ENCODE measurements at regions of chr10 and their contacts with region 1.

Region 1: DNA sequence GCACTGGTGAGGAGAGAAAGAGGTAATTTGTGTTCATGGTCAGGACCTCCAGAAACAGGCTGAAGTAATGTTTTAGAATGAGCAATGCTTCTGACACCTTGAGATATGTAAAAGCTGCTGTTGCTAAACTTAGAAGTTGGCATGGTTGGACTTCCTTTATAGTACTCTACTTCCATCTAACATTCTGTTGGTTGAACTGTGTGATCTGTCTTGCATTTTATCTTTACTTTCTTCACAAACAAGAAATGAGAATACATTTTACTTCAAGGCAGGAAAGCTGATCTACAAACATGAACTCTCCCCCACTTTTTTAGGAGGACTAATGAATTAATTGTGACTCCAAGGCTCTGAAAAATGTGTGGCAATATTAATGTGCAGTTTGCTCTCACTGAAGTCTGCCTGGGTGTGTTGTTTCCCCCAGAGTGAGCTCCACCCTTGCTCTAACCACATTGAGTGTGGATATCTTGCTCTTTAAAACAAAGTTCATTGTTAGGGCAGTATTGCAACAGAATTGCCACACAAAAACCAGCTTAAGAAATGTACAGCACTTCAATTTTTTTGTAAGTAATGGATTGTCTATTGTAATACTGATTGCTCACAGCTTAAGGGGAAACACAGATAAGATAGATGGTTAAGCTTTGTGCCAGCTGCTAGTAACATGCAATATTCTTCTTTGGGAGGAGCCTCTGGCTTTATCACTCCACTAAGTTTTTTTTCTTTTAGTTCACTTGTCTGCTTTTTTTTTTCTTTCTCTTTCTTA is 69.0 kb downstream of the ADD3 start:
- DNase-seq: peak in 5 of 9 experiments; percentile 31 to 71 (median 50)
- ATAC-seq: peak; percentile 65
- H3K4me3 ChIP-seq: peak overlapping the region; percentile 17 to 39
- H3K4me3 Mint-ChIP-seq: peak overlapping the region; percentile 79
- H3K27ac ChIP-seq: peak overlapping the region; percentile 48 to 76
- H3K27ac Mint-ChIP-seq: peak overlapping the region; percentile 96
- H3K4me1 ChIP-seq: peaks cover 83% of the 10 kb centered on the region
- H3K4me1 Mint-ChIP-seq: peaks cover 86% of the 10 kb centered on the region
- H3K27me3 ChIP-seq: no peaks in the 10 kb centered on the region
- H3K27me3 Mint-ChIP-seq: no peaks in the 10 kb centered on the region
- CTCF ChIP-seq: no peak

Region 2: GRCh38 chr10:109173121-109173520 is 903.6 kb before region 1 on chr10:
- CTCF ChIA-PET with region 1: no interaction called
- POLR2A ChIA-PET with region 1: no interaction called
- intact Hi-C with region 1: no loop called
- DNase-seq: no peak
- ATAC-seq: no peak
- H3K4me3 ChIP-seq: no peak overlapping the region
- H3K4me3 Mint-ChIP-seq: no peak overlapping the region
- H3K27ac ChIP-seq: no peak overlapping the region
- H3K27ac Mint-ChIP-seq: no peak overlapping the region
- H3K4me1 ChIP-seq: no peaks in the 10 kb centered on the region
- H3K4me1 Mint-ChIP-seq: no peaks in the 10 kb centered on the region
- H3K27me3 ChIP-seq: no peaks in the 10 kb centered on the region
- H3K27me3 Mint-ChIP-seq: no peaks in the 10 kb centered on the region
- CTCF ChIP-seq: no peak

Region 3: GRCh38 chr10:110042181-110042580 is 34.6 kb before region 1 on chr10:
- CTCF ChIA-PET with region 1: interaction called, 3 read pairs
- POLR2A ChIA-PET with region 1: no interaction called
- intact Hi-C with region 1: loop called in 1 of 2 experiments (anchors 2 kb)
- DNase-seq: no peak
- ATAC-seq: no peak
- H3K4me3 ChIP-seq: no peak overlapping the region
- H3K4me3 Mint-ChIP-seq: no peak overlapping the region
- H3K27ac ChIP-seq: no peak overlapping the region
- H3K27ac Mint-ChIP-seq: no peak overlapping the region
- H3K4me1 ChIP-seq: peaks cover 41% of the 10 kb centered on the region
- H3K4me1 Mint-ChIP-seq: peaks cover 72% of the 10 kb centered on the region
- H3K27me3 ChIP-seq: no peaks in the 10 kb centered on the region
- H3K27me3 Mint-ChIP-seq: no peaks in the 10 kb centered on the region
- CTCF ChIP-seq: no peak

Region 4: DNA sequence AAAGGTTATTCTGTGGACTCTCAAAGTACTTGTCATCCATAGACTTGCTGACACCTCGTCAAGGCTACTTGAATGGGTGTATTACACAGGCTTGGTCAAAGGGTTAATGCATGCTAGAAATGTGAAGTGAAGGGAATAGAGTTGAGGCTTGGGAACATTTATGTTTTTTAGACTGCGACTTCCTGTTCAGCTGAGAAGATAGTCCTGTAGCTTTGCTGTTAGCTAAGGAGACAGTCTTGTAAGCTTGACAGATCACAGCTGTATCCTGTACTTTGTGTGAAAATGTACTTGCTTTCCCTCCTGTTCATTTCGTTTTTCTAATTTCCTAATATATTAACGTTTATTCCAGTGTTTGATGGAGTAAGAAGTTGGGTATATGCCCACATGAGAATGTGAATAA is 16.8 kb before region 1 on chr10:
- CTCF ChIA-PET with region 1: interaction called, 4 read pairs
- POLR2A ChIA-PET with region 1: interaction called, 3 read pairs
- intact Hi-C with region 1: loop called in 1 of 2 experiments (anchors 2 kb)
- DNase-seq: no peak
- ATAC-seq: peak; percentile 29
- H3K4me3 ChIP-seq: no peak overlapping the region
- H3K4me3 Mint-ChIP-seq: peak overlapping the region; percentile 13
- H3K27ac ChIP-seq: no peak overlapping the region
- H3K27ac Mint-ChIP-seq: peak overlapping the region; percentile 65
- H3K4me1 ChIP-seq: peaks cover 79% of the 10 kb centered on the region
- H3K4me1 Mint-ChIP-seq: peaks cover 79% of the 10 kb centered on the region
- H3K27me3 ChIP-seq: no peaks in the 10 kb centered on the region
- H3K27me3 Mint-ChIP-seq: no peaks in the 10 kb centered on the region
- CTCF ChIP-seq: no peak

Measured in CD8-positive, alpha-beta T cell (primary cell).